Spleen (tissue), 13 donors: ENCODE measurements at regions of chr20 and their contacts with region 1.

Region 1: GRCh38 chr20:37990571-37991151 is 42.6 kb downstream of the TTI1 start:
- DNase-seq: peak; percentile 86
- H3K4me3 ChIP-seq: no peak overlapping the region
- H3K27ac ChIP-seq: peak overlapping the region in 5 of 8 donors; percentile 15 to 51 (median 42)
- H3K4me1 ChIP-seq: peaks cover 12 to 45% (median 27%) of the 10 kb centered on the region in 6 donors
- H3K27me3 ChIP-seq: no peaks in the 10 kb centered on the region
- CTCF ChIP-seq: no peak
- POLR2A ChIP-seq: no peak

Region 2: DNA sequence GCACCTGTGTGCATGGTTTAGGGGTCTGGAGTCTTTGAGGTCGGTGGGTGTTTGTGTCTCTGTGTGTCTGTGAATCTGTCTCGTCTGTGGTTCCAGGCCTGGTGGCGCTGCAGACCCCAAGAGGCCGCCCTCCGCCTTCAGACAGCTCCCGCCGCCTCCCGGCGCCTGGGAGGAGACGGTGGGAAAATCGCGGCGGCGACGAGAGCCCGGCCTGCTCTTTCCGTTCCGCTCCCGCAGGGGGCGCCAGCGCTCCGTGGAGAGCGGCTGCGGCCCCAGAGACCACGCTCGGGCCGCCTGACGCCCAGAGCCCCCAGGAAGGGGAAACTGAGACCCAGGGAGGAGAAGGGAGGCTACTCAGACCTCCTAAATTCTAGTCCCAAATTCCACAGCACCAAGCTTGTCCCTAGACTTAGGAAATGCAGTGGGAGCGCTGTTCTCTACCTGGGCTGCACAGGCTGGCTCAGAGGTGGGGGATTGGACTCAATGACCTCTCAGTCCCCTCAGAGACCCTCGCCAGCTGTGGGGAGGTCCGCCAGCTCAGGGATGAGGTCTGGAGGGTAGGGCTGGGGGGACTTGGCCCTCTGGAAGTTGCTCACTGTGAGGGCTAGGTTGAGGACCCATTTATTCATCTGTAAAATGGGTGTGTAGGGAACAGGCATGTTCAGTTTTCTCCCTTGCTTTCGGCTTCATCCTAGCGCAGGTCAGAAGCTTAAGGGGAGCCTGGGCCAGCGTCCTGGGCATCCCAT is 426.1 kb before region 1 on chr20:
- intact Hi-C with region 1: loop called (anchors 5 kb)
- DNase-seq: peak; percentile 85
- H3K4me3 ChIP-seq: peak overlapping the region in 1 of 8 donors; percentile 28
- H3K27ac ChIP-seq: no peak overlapping the region
- H3K4me1 ChIP-seq: peaks cover 0 to 20% (median 6%) of the 10 kb centered on the region in 6 donors
- H3K27me3 ChIP-seq: peaks cover 0 to 81% (median 15%) of the 10 kb centered on the region in 7 donors
- CTCF ChIP-seq: peak; percentile 49 to 92 (median 88)
- POLR2A ChIP-seq: no peak

Region 3: GRCh38 chr20:37911838-37912281 is 78.8 kb before region 1 on chr20:
- intact Hi-C with region 1: loop called (anchors 10 kb)
- DNase-seq: no peak
- H3K4me3 ChIP-seq: no peak overlapping the region
- H3K27ac ChIP-seq: no peak overlapping the region
- H3K4me1 ChIP-seq: peaks cover 4 to 52% (median 34%) of the 10 kb centered on the region in 6 donors
- H3K27me3 ChIP-seq: peaks cover 0 to 93% (median 0%) of the 10 kb centered on the region in 7 donors
- CTCF ChIP-seq: no peak
- POLR2A ChIP-seq: no peak